Left ventricle myocardium superior (tissue), 1 donor: ENCODE measurements at regions of chr5 and their contacts with region 1.

Region 1: DNA sequence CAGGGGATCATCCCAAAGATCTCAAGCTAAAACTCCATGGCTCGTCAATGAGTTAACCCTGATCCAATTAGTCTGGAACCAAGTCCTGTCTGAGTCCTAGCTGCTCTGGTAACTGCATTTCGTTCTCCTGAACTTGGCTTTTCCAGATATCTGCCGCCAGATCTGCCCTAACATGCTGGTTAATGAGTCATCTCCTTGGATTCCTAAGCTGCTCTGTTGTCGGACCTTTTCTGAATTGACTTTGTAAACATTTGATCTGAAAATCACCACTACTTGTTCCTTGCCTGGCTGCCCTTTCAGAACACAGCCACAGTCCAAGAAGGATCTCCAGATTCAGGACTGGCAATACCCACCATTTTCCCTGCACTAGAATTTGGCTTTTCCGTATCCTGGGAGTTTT is 473.0 kb downstream of the ZSWIM6 start:
- DNase-seq: no peak
- ATAC-seq: no peak

Region 2: GRCh38 chr5:61673007-61673735 is 131.9 kb before region 1 on chr5:
- intact Hi-C with region 1: loop called (anchors 10 kb)
- DNase-seq: no peak
- ATAC-seq: no peak

Region 3: DNA sequence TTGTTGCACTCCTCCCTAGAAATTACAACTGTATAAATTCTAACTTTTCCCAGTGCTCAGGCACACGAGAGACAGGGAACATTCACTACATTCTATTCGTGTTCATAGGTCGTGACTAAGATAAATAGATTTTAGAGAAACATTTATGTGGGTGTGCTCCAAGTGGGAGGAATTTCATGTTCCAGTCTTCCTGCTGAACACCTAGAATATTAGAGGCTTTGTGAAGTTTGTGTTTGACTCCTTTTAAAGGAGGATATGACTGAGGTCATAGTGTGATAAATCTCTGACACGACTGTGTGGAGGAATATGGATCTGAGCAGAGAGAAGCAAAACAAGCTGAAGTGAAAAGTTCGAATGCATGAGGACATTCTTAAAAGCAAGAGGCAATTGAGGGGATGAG is 117.7 kb before region 1 on chr5:
- intact Hi-C with region 1: no loop called
- DNase-seq: no peak
- ATAC-seq: no peak